ENCODE measurements at regions of chr6 and their contacts with region 1.

Region 1: DNA sequence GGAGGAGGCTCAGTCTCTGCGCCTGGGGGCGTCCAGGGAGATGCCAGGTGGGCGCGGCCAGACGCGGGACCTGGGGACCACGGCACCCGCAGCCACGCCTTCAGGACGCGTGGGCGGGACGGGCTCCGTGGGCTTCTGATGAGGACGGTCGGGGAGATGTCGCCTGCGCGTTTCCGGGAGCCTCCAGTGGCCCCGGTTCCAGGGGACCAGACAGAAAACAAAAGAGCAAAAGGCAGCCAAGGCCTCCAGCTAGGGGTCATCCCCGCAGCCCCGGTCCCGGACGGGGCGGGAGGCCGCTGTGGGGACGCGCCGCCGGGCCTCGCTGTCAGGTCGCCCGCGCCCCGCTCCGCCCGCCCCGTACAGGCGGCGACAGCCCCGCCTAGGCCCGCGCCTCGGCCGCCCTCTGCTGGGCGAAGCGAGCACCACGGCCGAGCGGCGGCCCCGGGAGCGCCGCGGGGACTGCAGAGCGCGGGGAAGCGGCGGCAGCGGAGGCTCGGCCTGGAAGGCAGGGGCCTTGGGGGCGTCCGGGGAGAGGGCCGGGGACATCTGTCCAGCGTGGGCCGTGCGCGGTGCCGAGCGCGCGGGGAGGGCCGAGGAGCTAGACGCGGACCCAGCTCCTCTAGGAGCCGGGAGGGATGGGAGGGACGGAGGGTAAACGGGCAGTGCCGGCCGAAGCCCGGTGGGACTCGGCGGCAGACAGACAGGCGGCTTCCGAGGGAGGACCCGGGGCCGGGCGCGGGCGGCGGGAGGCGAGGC is 48.7 kb downstream of the TMEM242 start:
- DNase-seq: peak; percentile 86
- H3K4me3 Mint-ChIP-seq: peak overlapping the region; percentile 80
- H3K27ac Mint-ChIP-seq: peak overlapping the region; percentile 75
- H3K4me1 Mint-ChIP-seq: peaks cover 5% of the 10 kb centered on the region
- H3K27me3 Mint-ChIP-seq: no peaks in the 10 kb centered on the region

Region 2: GRCh38 chr6:156564127-156564806 is 710.4 kb before region 1 on chr6:
- CTCF ChIA-PET with region 1: no interaction called
- intact Hi-C with region 1: loop called (anchors 1 kb)
- DNase-seq: peak; percentile 86
- H3K4me3 Mint-ChIP-seq: no peak overlapping the region
- H3K27ac Mint-ChIP-seq: no peak overlapping the region
- H3K4me1 Mint-ChIP-seq: peaks cover 5% of the 10 kb centered on the region
- H3K27me3 Mint-ChIP-seq: peaks cover 2% of the 10 kb centered on the region

Region 3: GRCh38 chr6:156686995-156687788 is 587.5 kb before region 1 on chr6:
- CTCF ChIA-PET with region 1: no interaction called
- intact Hi-C with region 1: loop called (anchors 2 kb)
- DNase-seq: peak; percentile 63
- H3K4me3 Mint-ChIP-seq: peak overlapping the region; percentile 82
- H3K27ac Mint-ChIP-seq: peak overlapping the region; percentile 91
- H3K4me1 Mint-ChIP-seq: peaks cover 32% of the 10 kb centered on the region
- H3K27me3 Mint-ChIP-seq: no peaks in the 10 kb centered on the region

Region 4: DNA sequence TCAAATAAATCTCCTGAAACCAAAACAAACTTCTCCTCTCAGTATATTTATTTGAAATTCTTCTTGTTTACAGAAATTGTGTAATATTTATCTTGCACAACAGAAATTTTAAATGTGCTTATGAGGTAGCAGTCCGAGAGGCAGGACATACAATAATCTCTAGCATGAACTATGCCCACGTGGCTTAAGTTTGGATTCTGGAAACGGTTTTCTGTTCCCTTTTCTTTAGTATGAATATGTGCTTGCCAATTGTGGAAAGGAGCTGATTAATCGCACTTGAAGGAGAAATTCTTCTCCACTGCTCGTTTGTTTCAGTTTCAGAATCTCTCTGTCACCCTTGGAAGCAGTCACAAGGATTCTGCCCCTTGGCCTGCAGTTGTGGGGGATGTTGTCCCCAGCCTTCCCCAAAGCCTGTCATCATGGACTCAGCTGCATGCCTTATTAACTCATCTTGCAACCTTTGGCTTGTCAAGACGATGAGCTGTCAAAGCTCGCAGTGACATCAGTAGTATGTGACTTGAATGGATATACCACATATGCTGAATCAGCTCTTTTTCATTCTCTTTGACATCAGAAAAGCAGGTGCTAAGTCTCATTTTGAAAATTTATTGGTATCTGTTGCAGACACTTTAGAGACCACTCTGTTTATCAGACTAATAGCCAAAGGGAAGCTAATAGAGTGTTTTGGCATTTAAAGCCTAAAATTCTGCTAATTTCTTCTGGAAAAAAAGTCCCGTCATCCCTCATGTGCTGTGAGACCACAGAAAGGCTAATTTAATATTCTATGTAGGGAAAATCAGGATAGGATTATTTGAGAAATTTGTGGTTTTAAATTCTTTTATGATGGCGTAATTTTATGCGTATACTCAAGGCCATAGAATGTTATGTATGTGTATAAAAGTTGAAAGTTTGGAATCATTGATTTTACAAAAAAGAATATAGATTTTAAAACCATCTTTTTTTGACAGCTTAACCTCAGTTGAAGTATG is 310.6 kb before region 1 on chr6:
- CTCF ChIA-PET with region 1: no interaction called
- intact Hi-C with region 1: loop called (anchors 5 kb)
- DNase-seq: peak; percentile 73
- H3K4me3 Mint-ChIP-seq: no peak overlapping the region
- H3K27ac Mint-ChIP-seq: no peak overlapping the region
- H3K4me1 Mint-ChIP-seq: peaks cover 53% of the 10 kb centered on the region
- H3K27me3 Mint-ChIP-seq: no peaks in the 10 kb centered on the region

Region 5: GRCh38 chr6:157034436-157035230 is 240.0 kb before region 1 on chr6:
- CTCF ChIA-PET with region 1: no interaction called
- intact Hi-C with region 1: loop called (anchors 1 kb)
- DNase-seq: no peak
- H3K4me3 Mint-ChIP-seq: peak overlapping the region; percentile 41
- H3K27ac Mint-ChIP-seq: peak overlapping the region; percentile 63
- H3K4me1 Mint-ChIP-seq: peaks cover 26% of the 10 kb centered on the region
- H3K27me3 Mint-ChIP-seq: no peaks in the 10 kb centered on the region

Region 6: GRCh38 chr6:157221007-157221816 is 53.4 kb before region 1 on chr6:
- CTCF ChIA-PET with region 1: no interaction called
- intact Hi-C with region 1: loop called (anchors 1 kb)
- DNase-seq: peak; percentile 91
- H3K4me3 Mint-ChIP-seq: peak overlapping the region; percentile 74
- H3K27ac Mint-ChIP-seq: peak overlapping the region; percentile 44
- H3K4me1 Mint-ChIP-seq: peaks cover 37% of the 10 kb centered on the region
- H3K27me3 Mint-ChIP-seq: no peaks in the 10 kb centered on the region

Region 7: DNA sequence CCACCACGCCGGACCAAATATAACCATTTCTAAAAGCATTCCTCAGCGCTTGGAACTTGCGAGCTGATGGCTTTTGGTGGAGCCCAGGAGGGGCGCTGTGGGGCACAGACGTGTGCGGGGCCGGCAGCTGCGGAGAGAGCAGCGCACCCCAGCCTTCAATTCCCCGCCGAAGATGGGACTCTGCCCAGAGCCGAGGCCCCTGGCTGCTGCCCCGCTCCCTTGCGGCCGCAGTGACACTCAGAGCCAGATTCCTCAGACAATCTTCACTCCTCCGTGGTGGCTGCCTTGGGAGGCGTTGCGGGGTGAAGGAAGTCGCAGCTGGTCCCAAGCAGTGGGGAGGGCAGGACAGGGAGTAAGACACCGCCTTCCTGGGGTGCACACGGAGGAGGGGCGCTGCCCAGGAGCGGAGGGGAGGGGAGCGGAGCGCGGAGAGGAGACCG is 39.0 kb before region 1 on chr6:
- CTCF ChIA-PET with region 1: interaction called, 8 read pairs
- intact Hi-C with region 1: loop called (anchors 1 kb)
- DNase-seq: peak; percentile 70
- H3K4me3 Mint-ChIP-seq: peak overlapping the region; percentile 89
- H3K27ac Mint-ChIP-seq: no peak overlapping the region
- H3K4me1 Mint-ChIP-seq: peaks cover 17% of the 10 kb centered on the region
- H3K27me3 Mint-ChIP-seq: peaks cover 23% of the 10 kb centered on the region

Region 8: GRCh38 chr6:157405986-157406385 is 131.3 kb after region 1 on chr6:
- CTCF ChIA-PET with region 1: no interaction called
- intact Hi-C with region 1: no loop called
- DNase-seq: no peak
- H3K4me3 Mint-ChIP-seq: no peak overlapping the region
- H3K27ac Mint-ChIP-seq: no peak overlapping the region
- H3K4me1 Mint-ChIP-seq: no peaks in the 10 kb centered on the region
- H3K27me3 Mint-ChIP-seq: no peaks in the 10 kb centered on the region

Region 9: GRCh38 chr6:157503018-157503747 is 228.5 kb after region 1 on chr6:
- CTCF ChIA-PET with region 1: no interaction called
- intact Hi-C with region 1: no loop called
- DNase-seq: no peak
- H3K4me3 Mint-ChIP-seq: no peak overlapping the region
- H3K27ac Mint-ChIP-seq: no peak overlapping the region
- H3K4me1 Mint-ChIP-seq: no peaks in the 10 kb centered on the region
- H3K27me3 Mint-ChIP-seq: no peaks in the 10 kb centered on the region

Region 10: DNA sequence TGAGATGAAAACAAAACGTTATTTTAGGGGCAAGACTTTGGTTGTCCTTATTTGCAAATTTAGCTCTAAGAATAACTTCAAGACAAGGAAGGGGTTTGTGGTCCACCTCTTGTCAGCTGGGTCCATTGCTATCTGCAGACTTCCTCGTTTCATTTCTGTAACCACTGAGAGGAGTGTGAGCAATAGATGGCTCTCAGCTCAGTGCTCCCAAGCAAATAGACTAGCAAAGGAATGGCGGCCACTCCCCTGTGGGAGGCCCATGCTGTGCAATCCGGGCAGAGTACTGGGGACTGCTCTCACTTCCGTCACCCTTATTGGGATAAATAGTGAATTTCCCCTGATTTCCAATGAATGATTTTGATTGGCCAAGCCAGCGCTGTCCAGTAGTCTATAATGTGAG is 282.9 kb after region 1 on chr6:
- CTCF ChIA-PET with region 1: no interaction called
- intact Hi-C with region 1: no loop called
- DNase-seq: no peak
- H3K4me3 Mint-ChIP-seq: no peak overlapping the region
- H3K27ac Mint-ChIP-seq: no peak overlapping the region
- H3K4me1 Mint-ChIP-seq: peaks cover 17% of the 10 kb centered on the region
- H3K27me3 Mint-ChIP-seq: no peaks in the 10 kb centered on the region

Region 11: GRCh38 chr6:157715765-157716164 is 441.1 kb after region 1 on chr6:
- CTCF ChIA-PET with region 1: no interaction called
- intact Hi-C with region 1: no loop called
- DNase-seq: no peak
- H3K4me3 Mint-ChIP-seq: no peak overlapping the region
- H3K27ac Mint-ChIP-seq: no peak overlapping the region
- H3K4me1 Mint-ChIP-seq: no peaks in the 10 kb centered on the region
- H3K27me3 Mint-ChIP-seq: no peaks in the 10 kb centered on the region

Measured in activated naive CD4-positive, alpha-beta T cell treated with anti-CD3 and anti-CD28 coated beads for 36 hours (primary cell).